B cell (primary cell): ENCODE measurements at regions of chr1 and their contacts with region 1.

Region 1: GRCh38 chr1:26602378-26602959 is 72.9 kb downstream of the RPS6KA1 start:
- DNase-seq: peak; percentile 78
- ATAC-seq: peak; percentile 62
- H3K4me3 ChIP-seq: no peak overlapping the region
- H3K4me3 Mint-ChIP-seq: no peak overlapping the region
- H3K27ac ChIP-seq: no peak overlapping the region
- H3K27ac Mint-ChIP-seq: no peak overlapping the region
- H3K4me1 ChIP-seq: peaks cover 0 to 5% of the 10 kb centered on the region in 2 donors
- H3K4me1 Mint-ChIP-seq: peaks cover 6% of the 10 kb centered on the region
- H3K27me3 ChIP-seq: no peaks in the 10 kb centered on the region
- H3K27me3 Mint-ChIP-seq: no peaks in the 10 kb centered on the region
- CTCF ChIP-seq: peak; percentile 92

Region 2: GRCh38 chr1:26378088-26378878 is 224.2 kb before region 1 on chr1:
- CTCF ChIA-PET with region 1: no interaction called
- POLR2A ChIA-PET with region 1: no interaction called
- intact Hi-C with region 1: no loop called
- DNase-seq: peak; percentile 62
- ATAC-seq: peak; percentile 93
- H3K4me3 ChIP-seq: peak overlapping the region in 3 of 5 experiments; percentile 17 to 36 (median 17)
- H3K4me3 Mint-ChIP-seq: peak overlapping the region; percentile 77
- H3K27ac ChIP-seq: peak overlapping the region; percentile 52 to 76
- H3K27ac Mint-ChIP-seq: peak overlapping the region; percentile 93
- H3K4me1 ChIP-seq: peaks cover 25 to 40% of the 10 kb centered on the region in 2 donors
- H3K4me1 Mint-ChIP-seq: peaks cover 46% of the 10 kb centered on the region
- H3K27me3 ChIP-seq: no peaks in the 10 kb centered on the region
- H3K27me3 Mint-ChIP-seq: no peaks in the 10 kb centered on the region
- CTCF ChIP-seq: no peak

Region 3: GRCh38 chr1:26500488-26501175 is 101.8 kb before region 1 on chr1:
- CTCF ChIA-PET with region 1: interaction called, 29 read pairs
- POLR2A ChIA-PET with region 1: no interaction called
- intact Hi-C with region 1: loop called (anchors 1 kb)
- DNase-seq: peak; percentile 96
- ATAC-seq: peak; percentile 75
- H3K4me3 ChIP-seq: peak overlapping the region in 4 of 5 experiments; percentile 74 to 93 (median 88)
- H3K4me3 Mint-ChIP-seq: peak overlapping the region; percentile 91
- H3K27ac ChIP-seq: peak overlapping the region; percentile 100
- H3K27ac Mint-ChIP-seq: peak overlapping the region; percentile 98
- H3K4me1 ChIP-seq: peaks cover 7 to 19% of the 10 kb centered on the region in 2 donors
- H3K4me1 Mint-ChIP-seq: peaks cover 8% of the 10 kb centered on the region
- H3K27me3 ChIP-seq: no peaks in the 10 kb centered on the region
- H3K27me3 Mint-ChIP-seq: no peaks in the 10 kb centered on the region
- CTCF ChIP-seq: peak; percentile 44

Region 4: DNA sequence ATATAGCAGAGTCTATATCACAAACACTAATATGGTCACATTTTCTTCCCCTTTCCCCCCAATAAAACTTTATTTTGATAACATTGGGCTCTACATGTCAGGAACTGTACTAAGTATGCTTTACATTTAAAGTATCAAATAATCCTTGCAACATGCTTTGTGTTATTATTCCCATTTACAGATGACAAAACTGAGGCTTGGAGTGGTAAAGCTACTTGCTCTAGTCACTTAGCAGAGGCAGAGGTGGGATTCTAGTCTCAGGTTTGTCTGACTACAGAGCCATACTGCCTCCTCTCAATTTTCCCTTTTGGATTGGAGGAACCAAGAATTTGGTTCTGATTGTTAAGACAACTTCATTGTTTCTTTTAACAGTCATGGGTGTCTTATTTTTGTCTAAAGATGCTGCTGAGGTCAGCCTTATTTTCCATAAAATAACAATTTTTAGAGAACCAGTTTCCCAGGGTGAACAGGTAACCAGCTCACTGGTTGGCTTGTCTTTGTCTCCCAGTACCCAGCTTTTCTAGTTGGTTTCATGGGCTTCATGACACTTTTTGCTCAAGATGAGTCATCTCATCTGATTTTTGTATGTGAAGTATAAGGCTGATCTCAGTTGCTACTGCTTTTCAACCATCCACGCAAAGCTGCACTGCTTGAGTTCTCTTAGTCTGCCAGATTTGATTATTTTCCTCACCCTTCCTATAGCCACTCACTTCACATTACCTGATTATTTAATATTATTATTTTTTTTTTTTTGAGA is 12.4 kb after region 1 on chr1:
- CTCF ChIA-PET with region 1: interaction called, 16 read pairs
- POLR2A ChIA-PET with region 1: no interaction called
- intact Hi-C with region 1: no loop called
- DNase-seq: no peak
- ATAC-seq: no peak
- H3K4me3 ChIP-seq: no peak overlapping the region
- H3K4me3 Mint-ChIP-seq: no peak overlapping the region
- H3K27ac ChIP-seq: no peak overlapping the region
- H3K27ac Mint-ChIP-seq: peak overlapping the region; percentile 32
- H3K4me1 ChIP-seq: peaks cover 16 to 18% of the 10 kb centered on the region in 2 donors
- H3K4me1 Mint-ChIP-seq: peaks cover 18% of the 10 kb centered on the region
- H3K27me3 ChIP-seq: no peaks in the 10 kb centered on the region
- H3K27me3 Mint-ChIP-seq: peaks cover 5% of the 10 kb centered on the region
- CTCF ChIP-seq: no peak

Region 5: GRCh38 chr1:26695356-26696118 is 93.1 kb after region 1 on chr1 and contains the start of gene ARID1A:
- CTCF ChIA-PET with region 1: interaction called, 53 read pairs
- POLR2A ChIA-PET with region 1: interaction called, 4 read pairs
- intact Hi-C with region 1: loop called (anchors 5 kb)
- DNase-seq: peak; percentile 99
- ATAC-seq: peak; percentile 62
- H3K4me3 ChIP-seq: peak within 1 kb of the TSS; percentile 22 to 84 (median 73)
- H3K4me3 Mint-ChIP-seq: peak within 1 kb of the TSS; percentile 91
- H3K27ac ChIP-seq: peak within 1 kb of the TSS; percentile 67 to 93
- H3K27ac Mint-ChIP-seq: peak within 1 kb of the TSS; percentile 93
- H3K4me1 ChIP-seq: peaks cover 46 to 48% of the 10 kb centered on the region in 2 donors
- H3K4me1 Mint-ChIP-seq: peaks cover 30% of the 10 kb centered on the region
- H3K27me3 ChIP-seq: no peaks in the 10 kb centered on the region
- H3K27me3 Mint-ChIP-seq: no peaks in the 10 kb centered on the region
- CTCF ChIP-seq: no peak
- total RNA-seq, gene ARID1A: 150 and 152 TPM in 2 replicates

Region 6: GRCh38 chr1:26794391-26794790 is 191.9 kb after region 1 on chr1:
- CTCF ChIA-PET with region 1: interaction called, 479 read pairs
- POLR2A ChIA-PET with region 1: interaction called, 22 read pairs
- intact Hi-C with region 1: loop called (anchors 1 kb)
- DNase-seq: no peak
- ATAC-seq: no peak
- H3K4me3 ChIP-seq: no peak overlapping the region
- H3K4me3 Mint-ChIP-seq: no peak overlapping the region
- H3K27ac ChIP-seq: no peak overlapping the region
- H3K27ac Mint-ChIP-seq: no peak overlapping the region
- H3K4me1 ChIP-seq: peaks cover 0 to 2% of the 10 kb centered on the region in 2 donors
- H3K4me1 Mint-ChIP-seq: peaks cover 2% of the 10 kb centered on the region
- H3K27me3 ChIP-seq: no peaks in the 10 kb centered on the region
- H3K27me3 Mint-ChIP-seq: no peaks in the 10 kb centered on the region
- CTCF ChIP-seq: no peak

Region 7: DNA sequence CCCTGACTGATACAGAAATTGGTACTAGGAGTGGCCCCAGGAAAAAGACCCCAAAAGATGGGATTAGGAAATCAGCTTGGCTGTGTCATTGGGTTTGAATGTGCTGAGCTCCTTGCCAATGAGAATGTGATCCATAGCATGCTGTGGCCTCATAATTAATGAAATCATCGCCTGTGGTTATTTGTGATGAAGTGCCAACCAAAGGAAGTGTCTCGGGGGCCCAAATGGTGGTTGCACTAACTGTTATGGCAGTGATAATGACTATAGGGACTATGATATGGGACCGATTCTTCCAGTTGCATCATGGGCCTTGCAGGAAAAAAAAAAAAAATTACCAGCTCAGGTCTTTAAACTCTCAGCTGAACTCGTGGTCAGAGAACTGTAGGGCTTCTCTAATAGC is 208.6 kb after region 1 on chr1:
- CTCF ChIA-PET with region 1: interaction called, 56 read pairs
- POLR2A ChIA-PET with region 1: no interaction called
- intact Hi-C with region 1: no loop called
- DNase-seq: no peak
- ATAC-seq: no peak
- H3K4me3 ChIP-seq: no peak overlapping the region
- H3K4me3 Mint-ChIP-seq: no peak overlapping the region
- H3K27ac ChIP-seq: no peak overlapping the region
- H3K27ac Mint-ChIP-seq: no peak overlapping the region
- H3K4me1 ChIP-seq: no peaks in the 10 kb centered on the region
- H3K4me1 Mint-ChIP-seq: peaks cover 3% of the 10 kb centered on the region
- H3K27me3 ChIP-seq: peaks cover 0 to 6% (median 0%) of the 10 kb centered on the region in 4 experiments
- H3K27me3 Mint-ChIP-seq: no peaks in the 10 kb centered on the region
- CTCF ChIP-seq: no peak

Region 8: DNA sequence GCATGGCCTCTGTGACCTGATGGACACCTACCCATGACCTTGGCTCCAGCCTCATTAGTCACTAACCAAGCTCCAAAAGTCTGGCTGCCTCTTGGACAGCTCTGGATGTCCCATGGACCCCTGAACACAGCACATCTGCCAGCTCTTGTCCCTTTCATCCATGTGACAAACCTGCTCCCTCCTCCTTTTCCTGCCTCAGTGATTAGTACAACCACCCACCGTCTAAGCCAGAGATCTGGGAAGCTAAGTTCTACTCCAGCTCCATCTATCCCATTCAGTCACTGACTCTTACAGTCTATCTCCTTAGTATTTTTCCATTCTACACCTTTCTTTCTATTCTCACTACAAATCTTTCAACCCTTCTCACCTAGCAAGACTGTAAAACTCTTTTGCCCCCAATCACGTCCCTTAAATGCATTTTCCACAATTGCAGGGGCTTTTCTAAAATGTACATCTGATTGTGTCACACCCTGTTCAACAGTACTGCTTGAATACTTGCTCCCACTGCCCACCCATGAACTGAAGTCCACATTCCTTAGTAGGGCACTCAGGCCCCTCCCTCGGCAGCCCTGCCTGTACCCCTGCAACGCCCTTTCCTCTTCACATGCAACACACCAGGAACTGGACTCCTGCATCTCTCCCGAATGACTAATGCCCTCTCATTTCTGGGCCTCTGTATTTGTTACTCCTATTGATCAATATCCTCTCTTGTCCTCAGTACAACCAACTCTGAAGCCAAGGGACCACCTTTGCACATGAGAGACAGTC is 280.4 kb after region 1 on chr1:
- CTCF ChIA-PET with region 1: interaction called, 11 read pairs
- POLR2A ChIA-PET with region 1: no interaction called
- intact Hi-C with region 1: loop called (anchors 1 kb)
- DNase-seq: no peak
- ATAC-seq: no peak
- H3K4me3 ChIP-seq: no peak overlapping the region
- H3K4me3 Mint-ChIP-seq: no peak overlapping the region
- H3K27ac ChIP-seq: no peak overlapping the region
- H3K27ac Mint-ChIP-seq: no peak overlapping the region
- H3K4me1 ChIP-seq: peaks cover 0 to under 1% of the 10 kb centered on the region in 2 donors
- H3K4me1 Mint-ChIP-seq: peaks cover 8% of the 10 kb centered on the region
- H3K27me3 ChIP-seq: no peaks in the 10 kb centered on the region
- H3K27me3 Mint-ChIP-seq: no peaks in the 10 kb centered on the region
- CTCF ChIP-seq: no peak